GM12878 (cell line): ENCODE measurements at regions of chr17 and their contacts with region 1.

Region 1: GRCh38 chr17:29722411-29723198 is 99.9 kb upstream of the CORO6 start:
- DNase-seq: peak; percentile 96
- ATAC-seq: peak; percentile 86
- H3K4me3 ChIP-seq: peak overlapping the region; percentile 53; the same call in 1 of the 2 replicates
- H3K27ac ChIP-seq: peak overlapping the region; percentile 94
- H3K4me1 ChIP-seq: peaks cover 62% of the 10 kb centered on the region
- H3K27me3 ChIP-seq: no peaks in the 10 kb centered on the region
- CTCF ChIP-seq: no peak
- EP300 ChIP-seq: peak; percentile 33 to 67; a peak in 3 of 4 replicates
- POLR2A ChIP-seq: peak; percentile 65
- RAD21 ChIP-seq: no peak; the same call in 1 of the 2 replicates

Region 2: GRCh38 chr17:29451121-29451742 is 271.4 kb before region 1 on chr17:
- CTCF ChIA-PET with region 1: no interaction called
- POLR2A ChIA-PET with region 1: no interaction called
- RAD21 ChIA-PET with region 1: no interaction called
- SMC1A ChIA-PET with region 1: no interaction called
- in situ Hi-C with region 1: no loop called
- intact Hi-C with region 1: no loop called
- DNase-seq: no peak
- ATAC-seq: no peak
- H3K4me3 ChIP-seq: no peak overlapping the region
- H3K27ac ChIP-seq: no peak overlapping the region
- H3K4me1 ChIP-seq: no peaks in the 10 kb centered on the region
- H3K27me3 ChIP-seq: no peaks in the 10 kb centered on the region
- CTCF ChIP-seq: no peak
- EP300 ChIP-seq: no peak
- POLR2A ChIP-seq: no peak
- RAD21 ChIP-seq: no peak

Region 3: GRCh38 chr17:29640413-29640812 is 82.2 kb before region 1 on chr17:
- CTCF ChIA-PET with region 1: interaction called, 4 read pairs
- POLR2A ChIA-PET with region 1: no interaction called
- RAD21 ChIA-PET with region 1: interaction called, 11 read pairs
- SMC1A ChIA-PET with region 1: interaction called, 4 read pairs
- in situ Hi-C with region 1: no loop called
- intact Hi-C with region 1: no loop called
- DNase-seq: no peak
- ATAC-seq: no peak
- H3K4me3 ChIP-seq: no peak overlapping the region
- H3K27ac ChIP-seq: no peak overlapping the region
- H3K4me1 ChIP-seq: peaks cover 3% of the 10 kb centered on the region
- H3K27me3 ChIP-seq: no peaks in the 10 kb centered on the region
- CTCF ChIP-seq: no peak
- EP300 ChIP-seq: no peak
- POLR2A ChIP-seq: no peak
- RAD21 ChIP-seq: no peak

Region 4: GRCh38 chr17:29682054-29682453 is 40.6 kb before region 1 on chr17:
- CTCF ChIA-PET with region 1: interaction called, 6 read pairs
- POLR2A ChIA-PET with region 1: no interaction called
- RAD21 ChIA-PET with region 1: interaction called, 16 read pairs
- SMC1A ChIA-PET with region 1: interaction called, 20 read pairs
- in situ Hi-C with region 1: no loop called
- intact Hi-C with region 1: no loop called
- DNase-seq: no peak
- ATAC-seq: peak; percentile 91
- H3K4me3 ChIP-seq: no peak overlapping the region
- H3K27ac ChIP-seq: peak overlapping the region; percentile 53; the same call in 1 of the 2 replicates
- H3K4me1 ChIP-seq: 0 out of 2 replicates have a peak, but pooled peaks cover 4% of the 10 kb centered on the region
- H3K27me3 ChIP-seq: no peaks in the 10 kb centered on the region
- CTCF ChIP-seq: peak; percentile 5 to 22 (median 12); a peak in 1 of 6 replicates
- EP300 ChIP-seq: no peak
- POLR2A ChIP-seq: no peak
- RAD21 ChIP-seq: peak; percentile 32

Region 5: GRCh38 chr17:29705386-29705785 is 17.2 kb before region 1 on chr17:
- CTCF ChIA-PET with region 1: interaction called, 50 read pairs
- POLR2A ChIA-PET with region 1: interaction called, 87 read pairs
- RAD21 ChIA-PET with region 1: interaction called, 141 read pairs
- SMC1A ChIA-PET with region 1: interaction called, 224 read pairs
- in situ Hi-C with region 1: no loop called
- intact Hi-C with region 1: loop called (anchors 1 kb)
- DNase-seq: no peak
- ATAC-seq: peak; percentile 7; the same call in 2 of the 3 replicates
- H3K4me3 ChIP-seq: peak overlapping the region; percentile 43; the same call in 1 of the 2 replicates
- H3K27ac ChIP-seq: peak overlapping the region; percentile 91
- H3K4me1 ChIP-seq: peaks cover 29% of the 10 kb centered on the region
- H3K27me3 ChIP-seq: no peaks in the 10 kb centered on the region
- CTCF ChIP-seq: no peak
- EP300 ChIP-seq: no peak
- POLR2A ChIP-seq: no peak
- RAD21 ChIP-seq: no peak

Region 6: GRCh38 chr17:29732613-29733012 is 10.0 kb after region 1 on chr17:
- CTCF ChIA-PET with region 1: interaction called, 8 read pairs
- POLR2A ChIA-PET with region 1: interaction called, 9 read pairs
- RAD21 ChIA-PET with region 1: interaction called, 9 read pairs
- SMC1A ChIA-PET with region 1: interaction called, 29 read pairs
- in situ Hi-C with region 1: no loop called
- intact Hi-C with region 1: no loop called
- DNase-seq: no peak
- ATAC-seq: no peak
- H3K4me3 ChIP-seq: no peak overlapping the region
- H3K27ac ChIP-seq: no peak overlapping the region; the same call in 1 of the 2 replicates
- H3K4me1 ChIP-seq: no peaks in the 10 kb centered on the region; the same call in 1 of the 2 replicates
- H3K27me3 ChIP-seq: no peaks in the 10 kb centered on the region
- CTCF ChIP-seq: no peak
- EP300 ChIP-seq: no peak
- POLR2A ChIP-seq: no peak
- RAD21 ChIP-seq: no peak

Region 7: DNA sequence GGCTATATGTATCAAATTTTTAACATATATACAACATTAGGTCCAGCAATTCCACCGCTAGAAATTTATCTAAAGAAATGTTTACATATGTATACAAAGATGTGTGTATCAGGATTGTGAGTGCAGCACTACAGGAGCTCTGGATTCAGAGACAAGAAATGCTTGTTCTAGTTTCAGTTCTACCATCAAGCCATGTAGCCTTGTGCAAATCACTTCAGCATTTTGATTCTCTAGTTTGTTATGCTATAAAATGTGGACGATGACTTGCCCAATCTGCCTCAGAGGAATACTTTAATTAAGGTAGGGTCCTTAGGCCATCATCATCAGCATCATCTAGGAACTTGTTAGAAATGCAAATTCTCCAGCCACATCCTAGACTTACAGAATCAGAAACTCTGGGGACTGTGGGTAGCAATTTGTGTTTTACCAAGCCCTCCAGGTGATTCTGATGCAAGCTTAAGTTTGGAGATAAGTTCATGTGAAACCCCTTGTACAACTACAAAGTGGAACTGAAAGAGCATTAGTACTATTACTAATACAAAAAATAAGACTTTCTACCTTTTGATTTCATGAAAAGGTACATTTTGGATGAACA is 31.3 kb after region 1 on chr17:
- CTCF ChIA-PET with region 1: interaction called, 39 read pairs
- POLR2A ChIA-PET with region 1: interaction called, 18 read pairs
- RAD21 ChIA-PET with region 1: interaction called, 144 read pairs
- SMC1A ChIA-PET with region 1: interaction called, 297 read pairs
- in situ Hi-C with region 1: no loop called
- intact Hi-C with region 1: no loop called
- DNase-seq: peak; percentile 61
- ATAC-seq: peak; percentile 81
- H3K4me3 ChIP-seq: no peak overlapping the region
- H3K27ac ChIP-seq: peak overlapping the region; percentile 21
- H3K4me1 ChIP-seq: peaks cover 32% of the 10 kb centered on the region
- H3K27me3 ChIP-seq: no peaks in the 10 kb centered on the region
- CTCF ChIP-seq: no peak
- EP300 ChIP-seq: no peak
- POLR2A ChIP-seq: no peak
- RAD21 ChIP-seq: no peak